ENCODE measurements at regions of chr14 and their contacts with region 1.

Region 1: GRCh38 chr14:22386924-22387775 is 201.9 kb downstream of the DAD1 start:
- DNase-seq: peak; percentile 79
- CTCF ChIP-seq: peak; percentile 76

Region 2: GRCh38 chr14:20922474-20922873 is 1464.7 kb before region 1 on chr14:
- CTCF ChIA-PET with region 1: no interaction called
- POLR2A ChIA-PET with region 1: no interaction called
- DNase-seq: no peak
- CTCF ChIP-seq: no peak

Region 3: GRCh38 chr14:22407033-22407432 is 19.9 kb after region 1 on chr14:
- CTCF ChIA-PET with region 1: interaction called, 15 read pairs
- POLR2A ChIA-PET with region 1: no interaction called
- DNase-seq: no peak
- CTCF ChIP-seq: no peak

Region 4: GRCh38 chr14:22448905-22449599 is 61.9 kb after region 1 on chr14:
- CTCF ChIA-PET with region 1: interaction called, 56 read pairs
- POLR2A ChIA-PET with region 1: no interaction called
- DNase-seq: peak; percentile 38
- CTCF ChIP-seq: no peak

Region 5: GRCh38 chr14:22466491-22466890 is 79.3 kb after region 1 on chr14:
- CTCF ChIA-PET with region 1: interaction called, 322 read pairs
- POLR2A ChIA-PET with region 1: no interaction called
- DNase-seq: peak; percentile 45
- CTCF ChIP-seq: no peak

Region 6: GRCh38 chr14:22634233-22634900 is 247.2 kb after region 1 on chr14:
- CTCF ChIA-PET with region 1: no interaction called
- POLR2A ChIA-PET with region 1: no interaction called
- DNase-seq: no peak
- CTCF ChIP-seq: no peak

Region 7: DNA sequence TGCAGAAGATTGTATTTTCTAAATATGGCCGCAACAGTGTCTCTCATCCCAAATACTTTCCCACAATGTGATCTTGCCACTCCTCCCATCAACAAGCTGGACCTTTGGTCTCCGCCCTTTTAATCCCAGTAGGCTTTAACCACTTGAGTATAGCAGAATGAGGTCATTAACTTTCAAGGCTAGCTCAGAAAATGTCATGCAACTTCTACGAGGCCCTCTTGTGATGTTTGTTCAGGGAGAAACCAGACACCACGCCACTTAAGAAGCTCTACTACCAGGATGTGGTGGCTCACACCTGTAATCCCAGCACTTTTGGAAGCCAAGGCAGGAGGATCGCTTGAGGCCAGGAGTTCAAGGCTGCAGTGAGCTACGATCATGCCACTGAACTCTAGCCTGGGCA is 277.1 kb after region 1 on chr14:
- CTCF ChIA-PET with region 1: no interaction called
- POLR2A ChIA-PET with region 1: no interaction called
- DNase-seq: no peak
- CTCF ChIP-seq: no peak

Measured in GM10248 (cell line).